ENCODE measurements at regions of chr7 and their contacts with region 1.

Region 1: DNA sequence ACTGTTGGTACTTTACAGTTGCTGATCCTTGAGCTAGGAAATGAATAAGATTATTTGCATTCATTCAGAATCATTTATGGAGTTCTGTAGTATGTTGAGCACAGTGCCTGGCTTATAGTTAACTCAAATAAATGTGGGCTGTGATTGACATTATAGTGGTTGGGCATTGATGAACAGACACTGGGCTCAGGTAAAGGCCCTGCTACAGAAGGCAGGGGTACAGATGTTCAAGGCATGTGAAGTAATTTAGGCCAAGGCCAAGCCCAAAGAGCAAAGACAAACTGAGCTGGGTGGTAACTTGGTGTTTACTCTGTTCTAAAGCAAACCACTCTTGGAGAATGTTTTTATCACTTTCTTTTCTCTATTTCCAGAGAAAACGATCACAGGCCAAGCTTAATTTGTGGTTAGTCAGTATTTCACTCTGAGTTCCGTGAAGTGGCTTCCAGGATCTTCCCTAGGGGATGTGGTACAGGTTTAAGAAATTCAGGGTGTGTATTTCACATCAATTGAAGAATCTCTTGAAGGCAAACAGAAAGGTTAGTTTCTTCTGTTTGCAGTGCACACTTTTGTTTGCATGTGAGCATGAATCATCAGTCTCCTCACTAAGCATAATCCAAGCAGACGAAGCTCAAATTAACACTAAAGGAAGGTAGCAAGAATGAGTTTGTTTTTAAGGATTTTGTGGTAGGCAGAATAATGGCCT is 113.9 kb upstream of the PRR15 start:
- DNase-seq: no peak
- H3K4me3 ChIP-seq: no peak overlapping the region
- H3K27ac ChIP-seq: peak overlapping the region in 1 of 2 donors; percentile 44
- H3K4me1 ChIP-seq: no peaks in the 10 kb centered on the region
- H3K27me3 ChIP-seq: no peaks in the 10 kb centered on the region
- CTCF ChIP-seq: no peak
- POLR2A ChIP-seq: no peak

Region 2: GRCh38 chr7:29847496-29847895 is 397.8 kb after region 1 on chr7:
- intact Hi-C with region 1: loop called (anchors 5 kb)
- DNase-seq: no peak
- H3K4me3 ChIP-seq: no peak overlapping the region
- H3K27ac ChIP-seq: no peak overlapping the region
- H3K4me1 ChIP-seq: no peaks in the 10 kb centered on the region
- H3K27me3 ChIP-seq: no peaks in the 10 kb centered on the region
- CTCF ChIP-seq: no peak
- POLR2A ChIP-seq: no peak

Region 3: DNA sequence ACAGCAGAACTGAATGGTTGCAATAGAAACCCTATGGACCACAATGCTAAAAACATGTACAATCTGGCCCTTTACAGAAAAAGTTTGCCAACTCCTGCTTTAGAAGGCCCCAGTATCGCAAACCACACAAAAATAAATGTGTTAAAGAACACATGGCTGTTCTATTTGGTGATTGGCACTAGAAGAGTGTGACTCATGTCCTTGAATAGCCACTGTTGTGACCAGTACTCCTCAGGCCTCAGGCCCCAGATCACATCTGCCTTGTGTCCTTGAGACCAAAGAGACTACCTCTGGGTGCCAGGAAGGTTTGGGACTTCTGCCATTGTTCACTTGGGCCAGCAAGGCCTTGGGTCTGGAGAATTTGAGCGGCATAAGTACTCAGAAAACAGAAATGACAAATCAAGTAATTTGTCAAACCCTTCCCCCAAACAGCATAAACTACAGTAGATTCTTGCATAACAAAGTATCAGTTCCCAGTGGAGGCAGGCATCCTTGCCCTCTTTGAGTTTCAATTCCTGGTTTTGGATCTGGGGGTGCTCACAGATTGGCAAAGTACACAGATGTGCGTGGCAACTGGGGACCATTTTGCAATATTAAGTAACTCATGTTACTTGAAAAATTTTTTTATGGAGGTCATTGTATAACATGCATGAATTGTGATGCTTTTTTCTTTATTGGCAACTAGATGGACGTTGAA is 735.2 kb after region 1 on chr7:
- intact Hi-C with region 1: no loop called
- DNase-seq: peak in 1 of 2 donors; percentile 75
- H3K4me3 ChIP-seq: no peak overlapping the region
- H3K27ac ChIP-seq: peak overlapping the region; percentile 36 to 69
- H3K4me1 ChIP-seq: peaks cover 0 to 3% of the 10 kb centered on the region in 2 donors
- H3K27me3 ChIP-seq: no peaks in the 10 kb centered on the region
- CTCF ChIP-seq: no peak
- POLR2A ChIP-seq: no peak

Measured in breast epithelium (tissue), 4 donors.